GM12878 (cell line): ENCODE measurements at regions of chr2 and their contacts with region 1.

Region 1: GRCh38 chr2:88055371-88056128 is at the start of gene KRCC1:
- DNase-seq: peak; percentile 88
- ATAC-seq: peak; percentile 97
- H3K4me3 ChIP-seq: peak within 1 kb of the TSS; percentile 93
- H3K27ac ChIP-seq: peak within 1 kb of the TSS; percentile 94
- H3K4me1 ChIP-seq: peaks cover 4% of the 10 kb centered on the region
- H3K27me3 ChIP-seq: no peaks in the 10 kb centered on the region
- CTCF ChIP-seq: no peak
- EP300 ChIP-seq: no peak
- POLR2A ChIP-seq: peak; percentile 99
- RAD21 ChIP-seq: no peak
- polyA plus RNA-seq, gene KRCC1: 12.4 to 14.0 TPM

Region 2: GRCh38 chr2:88071365-88071764 is 15.8 kb after region 1 on chr2:
- CTCF ChIA-PET with region 1: interaction called, 17 read pairs
- POLR2A ChIA-PET with region 1: no interaction called
- RAD21 ChIA-PET with region 1: interaction called, 3 read pairs
- SMC1A ChIA-PET with region 1: interaction called, 5 read pairs
- in situ Hi-C with region 1: no loop called
- intact Hi-C with region 1: no loop called
- DNase-seq: no peak
- ATAC-seq: no peak
- H3K4me3 ChIP-seq: no peak overlapping the region
- H3K27ac ChIP-seq: no peak overlapping the region
- H3K4me1 ChIP-seq: no peaks in the 10 kb centered on the region
- H3K27me3 ChIP-seq: no peaks in the 10 kb centered on the region
- CTCF ChIP-seq: no peak
- EP300 ChIP-seq: no peak
- POLR2A ChIP-seq: no peak
- RAD21 ChIP-seq: no peak

Region 3: GRCh38 chr2:88114889-88115288 is 59.3 kb after region 1 on chr2:
- CTCF ChIA-PET with region 1: interaction called, 4 read pairs
- POLR2A ChIA-PET with region 1: no interaction called
- RAD21 ChIA-PET with region 1: no interaction called
- SMC1A ChIA-PET with region 1: interaction called, 3 read pairs
- in situ Hi-C with region 1: loop called (anchors 5 kb)
- intact Hi-C with region 1: no loop called
- DNase-seq: no peak
- ATAC-seq: no peak
- H3K4me3 ChIP-seq: no peak overlapping the region
- H3K27ac ChIP-seq: no peak overlapping the region
- H3K4me1 ChIP-seq: no peaks in the 10 kb centered on the region
- H3K27me3 ChIP-seq: peaks cover 0 to 1% of the 10 kb centered on the region in 2 experiments; a peak in 2 of 4 replicates
- CTCF ChIP-seq: no peak
- EP300 ChIP-seq: no peak
- POLR2A ChIP-seq: no peak
- RAD21 ChIP-seq: no peak

Region 4: DNA sequence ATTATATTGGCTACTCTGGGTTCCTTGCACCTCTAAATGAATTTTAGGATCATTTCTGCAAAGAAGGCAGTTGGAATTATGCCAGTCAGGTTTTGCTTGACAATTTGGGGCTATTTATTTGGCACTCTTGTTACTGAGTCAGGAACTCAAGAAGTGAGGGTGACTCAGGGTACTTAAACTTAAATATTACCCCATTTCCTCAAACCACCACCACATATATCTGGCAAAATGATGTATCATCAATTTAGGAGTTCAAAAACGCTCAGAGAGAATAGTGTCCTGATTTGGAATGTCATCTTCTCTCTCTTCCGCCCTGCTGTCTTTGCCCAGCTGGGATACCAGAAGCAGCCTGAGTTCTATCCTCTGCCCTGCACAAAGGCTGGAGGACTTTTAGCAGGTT is 112.2 kb after region 1 on chr2:
- CTCF ChIA-PET with region 1: interaction called, 163 read pairs
- POLR2A ChIA-PET with region 1: no interaction called
- RAD21 ChIA-PET with region 1: interaction called, 5 read pairs
- SMC1A ChIA-PET with region 1: interaction called, 6 read pairs
- in situ Hi-C with region 1: no loop called
- intact Hi-C with region 1: no loop called
- DNase-seq: no peak
- ATAC-seq: no peak
- H3K4me3 ChIP-seq: no peak overlapping the region
- H3K27ac ChIP-seq: no peak overlapping the region
- H3K4me1 ChIP-seq: no peaks in the 10 kb centered on the region
- H3K27me3 ChIP-seq: peaks cover 0 to 2% of the 10 kb centered on the region in 2 experiments; a peak in 3 of 4 replicates
- CTCF ChIP-seq: no peak
- EP300 ChIP-seq: no peak
- POLR2A ChIP-seq: no peak
- RAD21 ChIP-seq: no peak

Region 5: DNA sequence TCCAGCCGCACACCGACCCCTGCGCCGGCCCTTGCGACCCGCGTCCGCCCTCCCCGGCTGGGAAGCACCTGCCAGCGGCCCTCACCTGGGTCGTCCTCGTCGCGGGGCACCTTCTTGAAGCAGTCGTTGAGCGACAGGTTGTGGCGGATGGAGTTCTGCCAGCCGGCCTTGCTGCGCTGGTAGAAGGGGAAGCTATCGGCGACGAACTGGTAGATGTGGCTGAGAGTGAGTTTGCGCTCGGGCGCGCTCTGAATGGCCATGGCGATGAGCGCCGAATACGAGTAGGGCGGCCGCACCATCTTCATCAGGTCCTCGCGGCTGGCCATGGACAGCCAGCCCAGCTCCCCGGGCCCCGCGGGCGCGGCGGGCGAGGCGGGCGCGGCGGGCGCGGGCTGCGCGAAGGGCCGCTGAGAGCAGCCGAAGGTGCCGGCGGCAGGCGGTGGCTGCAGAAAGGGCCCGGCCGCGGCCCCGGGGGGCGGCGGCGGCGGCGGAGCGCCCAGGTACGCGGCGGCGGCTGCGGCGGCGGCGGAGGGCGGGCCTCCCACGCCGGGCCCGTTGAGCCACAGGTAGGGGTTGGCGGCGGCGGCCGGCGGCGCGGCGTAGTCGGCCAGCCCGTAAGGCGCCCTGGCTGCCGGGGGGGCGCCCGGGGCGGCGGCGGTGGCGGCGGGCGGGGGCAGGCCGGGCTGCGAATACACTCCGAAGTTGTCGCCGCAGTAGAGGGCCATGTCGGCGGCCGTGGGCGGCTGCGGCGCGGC is 396.4 kb after region 1 on chr2:
- CTCF ChIA-PET with region 1: interaction called, 11 read pairs
- POLR2A ChIA-PET with region 1: no interaction called
- RAD21 ChIA-PET with region 1: no interaction called
- SMC1A ChIA-PET with region 1: no interaction called
- in situ Hi-C with region 1: no loop called
- intact Hi-C with region 1: no loop called
- DNase-seq: no peak
- ATAC-seq: no peak
- H3K4me3 ChIP-seq: no peak overlapping the region
- H3K27ac ChIP-seq: no peak overlapping the region
- H3K4me1 ChIP-seq: no peaks in the 10 kb centered on the region
- H3K27me3 ChIP-seq: peaks cover 4 to 12% of the 10 kb centered on the region in 2 experiments
- CTCF ChIP-seq: no peak
- EP300 ChIP-seq: no peak
- POLR2A ChIP-seq: no peak
- RAD21 ChIP-seq: no peak